Naive thymus-derived CD4-positive, alpha-beta T cell (primary cell): ENCODE measurements at regions of chr10 and their contacts with region 1.

Region 1: DNA sequence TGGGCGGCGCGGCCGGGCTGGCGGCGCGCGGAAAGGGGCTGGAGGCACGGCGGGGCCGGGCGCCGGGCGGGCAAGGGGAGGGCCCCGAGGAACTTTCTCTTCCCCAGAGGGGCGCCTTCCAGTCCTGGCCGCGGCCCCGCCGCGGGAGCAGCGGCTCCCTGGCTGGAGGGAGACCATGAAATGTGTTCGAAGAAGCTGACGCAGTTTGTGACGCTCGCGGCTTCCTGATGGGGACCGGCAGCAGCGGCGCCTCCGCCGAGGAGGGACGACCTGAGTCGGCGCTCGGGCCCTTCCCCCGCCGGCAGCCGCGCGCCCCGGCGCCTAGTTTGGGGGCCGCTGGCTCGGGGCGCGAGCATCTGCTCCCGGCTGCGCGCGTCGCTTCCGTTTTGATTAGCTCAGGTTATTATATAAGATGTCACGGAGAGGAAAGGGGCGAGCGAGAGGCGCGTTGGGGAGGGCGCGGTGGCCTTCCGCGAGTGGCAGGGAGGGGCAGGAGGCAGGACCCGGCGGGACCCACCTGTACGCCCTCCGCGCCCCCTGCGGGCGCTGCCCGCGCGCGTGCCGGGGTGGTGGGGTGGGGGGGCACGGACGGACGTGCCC is 57.1 kb upstream of the PCGF5 start:
- DNase-seq: peak; percentile 72 to 92 (median 88)
- ATAC-seq: peak; percentile 75
- H3K4me3 ChIP-seq: peak overlapping the region; percentile 74
- H3K4me3 Mint-ChIP-seq: peak overlapping the region; percentile 88 to 95 (median 93)
- H3K27ac ChIP-seq: peak overlapping the region; percentile 96
- H3K27ac Mint-ChIP-seq: peak overlapping the region; percentile 88 to 98 (median 95)
- H3K4me1 ChIP-seq: peaks cover 8 to 20% of the 10 kb centered on the region in 2 donors
- H3K4me1 Mint-ChIP-seq: peaks cover 27 to 61% (median 51%) of the 10 kb centered on the region in 7 donors
- H3K27me3 ChIP-seq: no peaks in the 10 kb centered on the region
- H3K27me3 Mint-ChIP-seq: peaks cover 0 to 19% (median 0%) of the 10 kb centered on the region in 5 donors

Region 2: DNA sequence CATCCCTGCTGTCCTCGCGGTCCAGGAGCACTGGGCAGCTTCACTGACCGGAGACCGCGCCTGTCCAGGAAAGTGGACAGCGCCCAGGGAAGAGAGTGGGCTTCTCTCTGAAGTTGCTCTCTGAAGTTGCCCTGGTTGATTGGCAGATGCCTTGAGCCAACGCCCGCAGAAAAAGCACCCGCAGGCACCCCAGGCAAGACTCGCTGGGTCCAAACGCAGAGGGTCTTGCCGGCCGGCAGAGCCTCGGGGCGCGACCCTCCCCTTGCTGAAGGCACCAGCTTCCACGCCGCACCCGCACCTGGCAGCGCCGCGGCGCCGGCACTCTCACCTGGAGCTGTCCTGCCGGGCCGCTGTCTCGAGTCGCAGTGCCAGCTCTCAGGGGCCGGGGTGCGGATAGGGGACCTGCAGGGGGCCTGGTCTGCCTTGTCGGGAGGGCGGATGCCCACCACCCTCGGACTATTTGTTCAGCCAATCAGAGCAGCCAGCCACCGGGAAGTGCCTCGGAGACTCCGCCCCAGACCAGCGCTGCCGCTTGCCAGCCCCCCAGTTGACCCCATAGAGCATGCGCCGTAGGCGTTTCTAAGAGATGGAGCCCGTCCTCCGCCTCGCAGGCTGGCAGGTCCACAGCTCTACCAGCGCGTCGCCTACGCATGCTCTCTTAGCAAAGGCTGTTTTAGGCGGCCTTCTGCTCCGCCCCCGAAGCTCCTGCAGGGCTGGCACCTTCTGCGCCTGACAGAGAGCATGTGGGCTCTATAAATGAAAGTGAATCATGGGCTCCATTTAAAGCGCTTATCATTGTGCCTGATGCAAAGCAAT is 1911.8 kb before region 1 on chr10 and contains the start of gene LIPA:
- CTCF ChIA-PET with region 1: no interaction called
- POLR2A ChIA-PET with region 1: no interaction called
- intact Hi-C with region 1: loop called in 1 of 2 experiments (anchors 10 kb)
- DNase-seq: peak; percentile 78 to 97 (median 94)
- ATAC-seq: peak; percentile 97
- H3K4me3 ChIP-seq: peak within 1 kb of the TSS; percentile 80
- H3K4me3 Mint-ChIP-seq: peak within 1 kb of the TSS; percentile 82 to 91 (median 90)
- H3K27ac ChIP-seq: peak within 1 kb of the TSS; percentile 76
- H3K27ac Mint-ChIP-seq: peak within 1 kb of the TSS; percentile 38 to 90 (median 84)
- H3K4me1 ChIP-seq: peaks cover 8 to 9% of the 10 kb centered on the region in 2 donors
- H3K4me1 Mint-ChIP-seq: peaks cover 17 to 32% (median 22%) of the 10 kb centered on the region in 7 donors
- H3K27me3 ChIP-seq: no peaks in the 10 kb centered on the region
- H3K27me3 Mint-ChIP-seq: peaks cover 0 to 9% (median 0%) of the 10 kb centered on the region in 5 donors
- total RNA-seq, gene LIPA: 19.9 to 49.9 (median 48.3) TPM

Region 3: DNA sequence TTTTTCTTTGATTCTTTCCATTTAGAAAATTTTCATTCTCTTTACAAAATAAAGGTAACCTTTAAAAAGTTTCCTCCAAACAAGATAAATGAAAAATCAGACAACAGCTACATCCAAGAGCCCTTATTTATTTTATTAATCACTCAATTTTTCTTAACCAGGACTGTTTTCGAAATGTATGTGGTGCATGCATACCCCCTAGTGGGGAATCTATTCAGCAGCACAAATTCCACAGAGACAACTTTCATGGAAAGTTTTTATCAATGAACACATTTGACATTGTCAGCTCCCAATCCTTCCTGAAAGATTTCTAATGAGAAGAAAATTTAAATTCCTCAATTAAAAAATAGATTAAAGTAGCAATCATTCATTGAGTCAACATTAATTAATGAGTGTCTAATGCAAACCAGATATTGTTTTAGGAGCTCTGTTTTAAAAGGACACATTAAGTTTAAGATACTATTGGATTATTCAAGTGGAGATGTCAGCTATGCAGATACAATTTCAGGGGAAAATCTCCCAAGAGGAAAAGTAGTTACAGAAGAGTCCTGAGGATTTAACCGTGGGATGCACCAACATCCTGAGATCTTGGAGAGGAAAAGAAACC is 300.4 kb before region 1 on chr10:
- CTCF ChIA-PET with region 1: no interaction called
- POLR2A ChIA-PET with region 1: no interaction called
- intact Hi-C with region 1: no loop called
- DNase-seq: peak in 3 of 9 donors; percentile 7 to 28 (median 27)
- ATAC-seq: no peak
- H3K4me3 ChIP-seq: no peak overlapping the region
- H3K4me3 Mint-ChIP-seq: no peak overlapping the region
- H3K27ac ChIP-seq: no peak overlapping the region
- H3K27ac Mint-ChIP-seq: no peak overlapping the region
- H3K4me1 ChIP-seq: no peaks in the 10 kb centered on the region
- H3K4me1 Mint-ChIP-seq: peaks cover 0 to 9% (median 4%) of the 10 kb centered on the region in 7 donors
- H3K27me3 ChIP-seq: no peaks in the 10 kb centered on the region
- H3K27me3 Mint-ChIP-seq: peaks cover 28 to 89% (median 59%) of the 10 kb centered on the region in 5 donors

Region 4: GRCh38 chr10:91088300-91089140 is 74.8 kb before region 1 on chr10:
- CTCF ChIA-PET with region 1: no interaction called
- POLR2A ChIA-PET with region 1: no interaction called
- intact Hi-C with region 1: loop called in 1 of 2 experiments (anchors 5 kb)
- DNase-seq: peak in 6 of 9 donors; percentile 10 to 37 (median 26)
- ATAC-seq: peak; percentile 64
- H3K4me3 ChIP-seq: no peak overlapping the region
- H3K4me3 Mint-ChIP-seq: no peak overlapping the region
- H3K27ac ChIP-seq: no peak overlapping the region
- H3K27ac Mint-ChIP-seq: peak overlapping the region in 2 of 9 donors; percentile 15 to 42
- H3K4me1 ChIP-seq: no peaks in the 10 kb centered on the region
- H3K4me1 Mint-ChIP-seq: peaks cover 0 to 2% (median 0%) of the 10 kb centered on the region in 7 donors
- H3K27me3 ChIP-seq: no peaks in the 10 kb centered on the region
- H3K27me3 Mint-ChIP-seq: peaks cover 0 to 11% (median 0%) of the 10 kb centered on the region in 5 donors

Region 5: DNA sequence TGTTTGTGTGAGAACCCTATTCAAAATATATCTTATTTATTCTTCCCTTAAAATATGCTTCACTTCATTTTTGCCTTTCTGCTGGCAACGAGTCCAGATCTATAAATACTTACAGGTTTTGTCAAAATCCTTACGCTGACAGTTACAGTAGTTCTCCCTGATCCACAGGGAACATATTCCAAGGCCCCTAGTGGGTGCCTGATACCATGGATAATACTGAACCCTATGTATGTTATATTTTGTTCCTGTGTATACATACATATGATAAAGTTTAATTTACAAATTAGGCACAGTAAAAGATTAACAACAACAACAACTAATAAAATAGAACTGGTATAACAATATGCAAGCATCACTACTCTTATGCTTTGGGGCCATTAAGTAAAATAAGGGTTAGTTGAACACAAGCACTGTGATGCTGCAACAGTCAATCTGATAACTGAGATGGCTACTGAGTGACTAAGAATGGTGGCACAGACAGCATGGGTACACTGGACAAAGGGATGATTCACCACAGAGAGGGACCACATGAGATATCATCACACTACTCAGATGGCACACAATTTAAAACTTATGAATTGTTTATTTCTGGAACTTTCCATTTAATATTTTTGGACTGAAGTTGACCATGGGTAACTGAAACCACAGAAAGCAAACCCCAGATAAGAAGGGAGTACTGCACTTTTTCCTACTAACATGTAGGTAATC is 27.7 kb after region 1 on chr10:
- CTCF ChIA-PET with region 1: no interaction called
- POLR2A ChIA-PET with region 1: interaction called, 4 read pairs
- intact Hi-C with region 1: loop called in 1 of 2 experiments (anchors 2 kb)
- DNase-seq: no peak
- ATAC-seq: peak; percentile 73
- H3K4me3 ChIP-seq: no peak overlapping the region
- H3K4me3 Mint-ChIP-seq: peak overlapping the region in 3 of 10 donors; percentile 4 to 24 (median 22)
- H3K27ac ChIP-seq: no peak overlapping the region
- H3K27ac Mint-ChIP-seq: peak overlapping the region in 8 of 9 donors; percentile 11 to 83 (median 34)
- H3K4me1 ChIP-seq: peaks cover 8 to 33% of the 10 kb centered on the region in 2 donors
- H3K4me1 Mint-ChIP-seq: peaks cover 37 to 89% (median 84%) of the 10 kb centered on the region in 7 donors
- H3K27me3 ChIP-seq: no peaks in the 10 kb centered on the region
- H3K27me3 Mint-ChIP-seq: no peaks in the 10 kb centered on the region

Region 6: GRCh38 chr10:91220194-91220953 is 57.0 kb after region 1 on chr10 and contains the start of gene PCGF5:
- CTCF ChIA-PET with region 1: interaction called, 7 read pairs
- POLR2A ChIA-PET with region 1: interaction called, 22 read pairs
- intact Hi-C with region 1: loop called (anchors 1 kb)
- DNase-seq: peak; percentile 82 to 98 (median 90)
- ATAC-seq: peak; percentile 98
- H3K4me3 ChIP-seq: peak within 1 kb of the TSS; percentile 68
- H3K4me3 Mint-ChIP-seq: peak within 1 kb of the TSS; percentile 84 to 96 (median 90)
- H3K27ac ChIP-seq: peak within 1 kb of the TSS; percentile 90
- H3K27ac Mint-ChIP-seq: peak within 1 kb of the TSS; percentile 76 to 95 (median 89)
- H3K4me1 ChIP-seq: peaks cover 28 to 34% of the 10 kb centered on the region in 2 donors
- H3K4me1 Mint-ChIP-seq: peaks cover 33 to 69% (median 55%) of the 10 kb centered on the region in 7 donors
- H3K27me3 ChIP-seq: no peaks in the 10 kb centered on the region
- H3K27me3 Mint-ChIP-seq: no peaks in the 10 kb centered on the region
- total RNA-seq, gene PCGF5: 41.2 to 62.3 (median 57.4) TPM

Region 7: GRCh38 chr10:91409869-91410637 is 246.7 kb after region 1 on chr10 and contains the start of gene HECTD2:
- CTCF ChIA-PET with region 1: no interaction called
- POLR2A ChIA-PET with region 1: interaction called, 10 read pairs
- intact Hi-C with region 1: loop called (anchors 1 to 10 kb)
- DNase-seq: peak; percentile 76 to 89 (median 86)
- ATAC-seq: peak; percentile 93
- H3K4me3 ChIP-seq: peak within 1 kb of the TSS; percentile 83
- H3K4me3 Mint-ChIP-seq: peak within 1 kb of the TSS; percentile 75 to 93 (median 90)
- H3K27ac ChIP-seq: peak within 1 kb of the TSS; percentile 88
- H3K27ac Mint-ChIP-seq: peak within 1 kb of the TSS; percentile 81 to 96 (median 91)
- H3K4me1 ChIP-seq: peaks cover 8 to 17% of the 10 kb centered on the region in 2 donors
- H3K4me1 Mint-ChIP-seq: peaks cover 8 to 18% (median 13%) of the 10 kb centered on the region in 7 donors
- H3K27me3 ChIP-seq: no peaks in the 10 kb centered on the region
- H3K27me3 Mint-ChIP-seq: peaks cover 0 to 27% (median 0%) of the 10 kb centered on the region in 5 donors
- total RNA-seq, gene HECTD2: 1.1 to 4.6 (median 2.0) TPM

Region 8: GRCh38 chr10:92290837-92291615 is 1127.7 kb after region 1 on chr10 and contains the starts of genes CPEB3 and MARCHF5:
- CTCF ChIA-PET with region 1: no interaction called
- POLR2A ChIA-PET with region 1: no interaction called
- intact Hi-C with region 1: loop called in 1 of 2 experiments (anchors 5 kb)
- DNase-seq: peak; percentile 77 to 92 (median 85)
- ATAC-seq: peak; percentile 99
- H3K4me3 ChIP-seq: peak within 1 kb of the TSS; percentile 90
- H3K4me3 Mint-ChIP-seq: peak within 1 kb of the TSS; percentile 85 to 97 (median 95)
- H3K27ac ChIP-seq: peak within 1 kb of the TSS; percentile 90
- H3K27ac Mint-ChIP-seq: peak within 1 kb of the TSS; percentile 75 to 96 (median 88)
- H3K4me1 ChIP-seq: peaks cover 0 to 6% of the 10 kb centered on the region in 2 donors
- H3K4me1 Mint-ChIP-seq: peaks cover 21 to 41% (median 31%) of the 10 kb centered on the region in 7 donors
- H3K27me3 ChIP-seq: no peaks in the 10 kb centered on the region
- H3K27me3 Mint-ChIP-seq: no peaks in the 10 kb centered on the region
- total RNA-seq, gene CPEB3: 2.0 to 3.3 (median 2.2) TPM
- total RNA-seq, gene MARCHF5: 22.0 to 37.1 (median 33.8) TPM